PC-3 (cell line): ENCODE measurements at regions of chr5 and their contacts with region 1.

Region 1: GRCh38 chr5:72498284-72498683 is 8.9 kb downstream of the ZNF366 start:
- DNase-seq: peak; percentile 38
- ATAC-seq: peak; percentile 83
- H3K4me3 ChIP-seq: no peak overlapping the region
- H3K27ac ChIP-seq: no peak overlapping the region
- H3K4me1 ChIP-seq: peaks cover 17% of the 10 kb centered on the region
- H3K27me3 ChIP-seq: no peaks in the 10 kb centered on the region
- CTCF ChIP-seq: no peak

Region 2: DNA sequence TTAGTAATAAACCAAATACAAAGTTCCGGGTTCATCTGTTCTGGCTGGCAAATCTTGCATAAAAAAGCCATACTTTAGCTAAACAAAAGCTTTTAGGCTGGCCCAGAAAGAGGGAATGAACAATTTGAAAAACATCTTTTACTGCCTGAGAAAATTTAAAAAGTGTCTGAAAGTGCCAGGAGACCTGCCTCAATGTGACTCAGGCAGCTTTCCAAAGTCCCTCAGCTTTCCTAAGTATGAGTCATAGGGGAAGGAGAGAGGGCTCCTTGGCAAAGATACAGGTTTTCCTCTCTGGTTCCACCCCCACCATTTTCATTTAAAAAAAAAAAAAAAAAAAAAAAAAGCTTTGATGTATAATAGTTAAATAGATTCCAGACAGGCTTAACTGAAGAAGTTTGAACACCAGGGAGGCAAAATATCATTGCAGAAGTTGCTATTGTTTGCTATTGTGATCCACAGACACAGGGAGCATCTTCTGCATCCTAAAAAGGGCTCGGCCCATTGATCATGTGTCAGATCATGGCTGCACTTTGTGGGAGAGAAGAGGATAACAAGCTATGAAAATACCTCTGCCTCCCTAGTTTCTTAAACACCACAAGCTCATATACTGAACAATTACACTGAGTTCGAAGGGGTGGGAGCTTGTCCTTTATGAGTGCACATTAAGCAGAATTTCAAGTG is 249.8 kb before region 1 on chr5:
- CTCF ChIA-PET with region 1: no interaction called
- POLR2A ChIA-PET with region 1: no interaction called
- intact Hi-C with region 1: no loop called
- DNase-seq: peak; percentile 84
- ATAC-seq: peak; percentile 37
- H3K4me3 ChIP-seq: no peak overlapping the region
- H3K27ac ChIP-seq: peak overlapping the region; percentile 96
- H3K4me1 ChIP-seq: peaks cover 55% of the 10 kb centered on the region
- H3K27me3 ChIP-seq: no peaks in the 10 kb centered on the region
- CTCF ChIP-seq: no peak

Region 3: DNA sequence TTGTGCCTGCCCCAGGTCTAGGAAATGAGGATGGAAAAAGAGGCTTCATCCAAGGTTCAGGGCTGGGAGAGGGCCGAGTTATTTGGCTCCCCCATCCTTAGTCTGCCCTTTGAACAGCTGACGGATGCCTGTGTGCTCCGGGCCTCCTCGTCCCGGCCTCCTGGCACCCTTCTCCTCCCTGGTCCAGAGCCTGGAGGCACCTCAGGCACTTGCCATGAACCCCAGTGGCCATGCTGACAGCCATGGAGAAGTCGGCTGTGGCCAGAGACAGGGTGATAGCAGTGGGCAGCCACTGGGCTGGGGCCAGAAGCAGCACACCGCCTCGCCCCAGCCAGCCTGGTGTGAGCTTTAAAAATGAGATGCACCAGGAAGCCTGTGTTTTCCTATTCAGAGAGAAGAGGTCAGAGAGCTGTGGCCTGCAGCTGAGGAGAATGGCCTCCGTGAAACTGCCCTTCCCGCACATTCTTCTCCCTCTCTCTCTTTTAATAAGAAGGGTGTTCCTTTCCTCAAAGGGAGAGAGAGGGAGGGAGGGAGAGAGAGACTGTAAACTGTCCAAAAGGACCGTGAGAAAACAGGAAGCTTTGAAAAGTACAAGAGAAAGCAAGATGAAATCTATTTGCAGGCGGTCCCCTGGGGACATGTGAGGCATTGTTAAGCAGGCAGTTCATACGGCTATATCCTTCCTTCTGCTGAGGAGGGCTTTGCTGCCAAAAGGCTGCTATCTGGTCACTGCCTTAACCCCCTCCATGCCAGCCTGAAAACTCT is 46.4 kb before region 1 on chr5:
- CTCF ChIA-PET with region 1: no interaction called
- POLR2A ChIA-PET with region 1: no interaction called
- intact Hi-C with region 1: loop called (anchors 5 kb)
- DNase-seq: peak; percentile 40
- ATAC-seq: peak; percentile 66
- H3K4me3 ChIP-seq: peak overlapping the region; percentile 23; the same call in 1 of the 2 replicates
- H3K27ac ChIP-seq: peak overlapping the region; percentile 55
- H3K4me1 ChIP-seq: peaks cover 20% of the 10 kb centered on the region
- H3K27me3 ChIP-seq: no peaks in the 10 kb centered on the region
- CTCF ChIP-seq: no peak

Region 4: DNA sequence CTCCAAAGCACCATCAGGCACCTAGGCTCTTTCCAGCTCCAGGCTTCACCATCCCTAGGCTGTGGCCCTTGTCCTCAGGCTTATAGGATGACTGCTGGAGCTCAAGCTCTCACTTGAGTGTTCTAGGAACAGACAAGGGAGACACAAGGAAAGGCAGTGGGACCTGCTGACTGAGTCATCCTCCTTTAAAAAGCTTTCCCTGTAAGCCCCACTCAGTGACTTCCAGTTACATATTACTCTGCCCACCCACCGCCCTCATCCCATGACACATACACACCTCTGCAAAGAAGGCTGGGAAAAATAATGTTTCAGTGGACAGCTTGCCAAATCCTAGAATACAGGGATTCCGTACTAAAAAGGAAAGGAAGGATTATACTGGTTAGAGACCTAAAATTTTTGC is 163.1 kb after region 1 on chr5:
- CTCF ChIA-PET with region 1: no interaction called
- POLR2A ChIA-PET with region 1: interaction called, 10 read pairs
- intact Hi-C with region 1: no loop called
- DNase-seq: peak; percentile 75
- ATAC-seq: peak; percentile 91
- H3K4me3 ChIP-seq: 0 out of 2 replicates have a peak overlapping the region, but pooled peaks have one; percentile 3
- H3K27ac ChIP-seq: peak overlapping the region; percentile 36
- H3K4me1 ChIP-seq: peaks cover 25% of the 10 kb centered on the region
- H3K27me3 ChIP-seq: no peaks in the 10 kb centered on the region
- CTCF ChIP-seq: no peak